Right lobe of liver (tissue), 6 donors: ENCODE measurements at regions of chr15 and their contacts with region 1.

Region 1: GRCh38 chr15:31079519-31079918 is 22.0 kb downstream of the TRPM1 start:
- DNase-seq: no peak
- ATAC-seq: no peak
- H3K4me3 ChIP-seq: no peak overlapping the region
- H3K27ac ChIP-seq: no peak overlapping the region
- H3K4me1 ChIP-seq: peaks cover 0 to 22% (median 0%) of the 10 kb centered on the region in 4 donors
- H3K27me3 ChIP-seq: no peaks in the 10 kb centered on the region
- CTCF ChIP-seq: no peak
- POLR2A ChIP-seq: no peak

Region 2: GRCh38 chr15:30962079-30962478 is 117.4 kb before region 1 on chr15:
- intact Hi-C with region 1: no loop called
- DNase-seq: no peak
- ATAC-seq: no peak
- H3K4me3 ChIP-seq: no peak overlapping the region
- H3K27ac ChIP-seq: no peak overlapping the region
- H3K4me1 ChIP-seq: no peaks in the 10 kb centered on the region
- H3K27me3 ChIP-seq: no peaks in the 10 kb centered on the region
- CTCF ChIP-seq: no peak
- POLR2A ChIP-seq: no peak

Region 3: GRCh38 chr15:31024330-31024729 is 55.2 kb before region 1 on chr15:
- intact Hi-C with region 1: loop called in 1 of 2 experiments (anchors 10 kb)
- DNase-seq: no peak
- ATAC-seq: peak in 1 of 4 donors; percentile 27
- H3K4me3 ChIP-seq: no peak overlapping the region
- H3K27ac ChIP-seq: no peak overlapping the region
- H3K4me1 ChIP-seq: no peaks in the 10 kb centered on the region
- H3K27me3 ChIP-seq: no peaks in the 10 kb centered on the region
- CTCF ChIP-seq: no peak
- POLR2A ChIP-seq: no peak

Region 4: DNA sequence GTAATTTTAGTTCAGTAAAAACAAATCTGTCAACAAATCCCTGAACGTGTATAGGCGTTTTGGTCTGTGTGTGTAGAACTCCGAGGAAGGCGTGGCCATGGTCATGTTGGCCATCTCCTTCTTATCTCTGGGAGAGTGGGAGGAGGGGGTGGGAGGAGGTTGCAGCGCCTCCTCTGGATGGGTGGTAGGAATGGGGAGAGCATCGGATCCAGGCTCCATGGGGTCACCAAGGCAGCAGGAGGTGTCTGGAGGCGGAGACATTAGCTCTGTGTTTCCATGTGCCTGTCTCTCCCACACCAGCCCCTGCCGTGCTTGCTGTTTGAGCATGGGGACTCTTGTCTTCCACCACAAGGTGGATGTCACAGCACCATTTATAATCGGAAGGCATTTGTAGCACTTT is 56.5 kb after region 1 on chr15:
- intact Hi-C with region 1: loop called in 1 of 2 experiments (anchors 10 kb)
- DNase-seq: no peak
- ATAC-seq: no peak
- H3K4me3 ChIP-seq: no peak overlapping the region
- H3K27ac ChIP-seq: no peak overlapping the region
- H3K4me1 ChIP-seq: peaks cover 0 to 13% (median 0%) of the 10 kb centered on the region in 4 donors
- H3K27me3 ChIP-seq: no peaks in the 10 kb centered on the region
- CTCF ChIP-seq: no peak
- POLR2A ChIP-seq: no peak